ENCODE measurements at regions of chr10 and their contacts with region 1.

Region 1: GRCh38 chr10:14822879-14823755 is 14.7 kb downstream of the CDNF start:
- DNase-seq: no peak
- H3K4me3 Mint-ChIP-seq: no peak overlapping the region
- H3K27ac Mint-ChIP-seq: no peak overlapping the region
- H3K4me1 Mint-ChIP-seq: peaks cover 22% of the 10 kb centered on the region
- H3K27me3 Mint-ChIP-seq: peaks cover 9% of the 10 kb centered on the region

Region 2: DNA sequence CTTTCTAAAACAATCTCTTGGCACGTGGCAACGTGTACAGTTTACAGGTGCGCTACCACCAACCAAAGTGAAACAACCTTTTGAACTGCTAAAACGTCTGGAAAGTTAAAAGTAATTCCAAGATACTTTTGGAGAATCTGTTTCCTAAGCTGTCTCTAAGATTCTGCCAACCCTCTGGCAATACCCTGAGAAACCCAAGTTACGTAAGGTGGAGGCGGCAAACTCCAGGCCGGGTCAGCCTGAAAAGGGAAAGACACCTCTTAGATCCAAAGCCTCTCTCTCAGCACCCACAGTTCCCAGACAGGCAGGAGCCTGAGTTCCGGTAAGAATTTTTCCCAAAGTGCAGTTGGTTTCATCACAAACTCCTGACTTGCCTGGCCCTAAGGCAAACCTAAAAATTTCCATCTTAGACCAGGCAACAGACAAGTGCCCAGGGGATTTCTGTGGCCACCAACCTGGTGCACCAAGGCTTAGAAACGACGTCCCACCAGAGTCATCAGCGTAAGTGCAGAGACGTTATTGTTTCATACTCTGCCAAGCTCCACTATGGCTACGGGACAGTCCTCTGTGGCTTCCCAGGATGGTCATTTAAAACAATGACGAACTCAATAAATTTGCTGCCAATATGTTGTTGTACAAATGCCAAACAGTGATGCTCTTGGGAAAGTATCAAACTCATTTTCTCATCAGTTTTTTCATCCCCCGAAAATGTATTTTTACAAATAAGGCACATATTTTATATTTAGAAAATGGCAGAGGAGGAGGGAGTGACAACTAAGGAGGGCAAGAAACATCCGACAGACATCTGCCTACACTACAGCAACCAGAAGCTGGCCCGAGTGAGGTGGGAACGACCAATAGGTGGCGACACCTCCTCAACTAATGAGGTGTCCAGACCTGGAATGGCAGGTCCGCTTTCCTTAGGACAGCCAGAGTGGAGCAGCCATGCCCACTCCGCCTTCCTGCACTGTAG is 286.6 kb before region 1 on chr10:
- intact Hi-C with region 1: loop called (anchors 1 kb)
- DNase-seq: no peak
- H3K4me3 Mint-ChIP-seq: no peak overlapping the region
- H3K27ac Mint-ChIP-seq: no peak overlapping the region
- H3K4me1 Mint-ChIP-seq: peaks cover 84% of the 10 kb centered on the region
- H3K27me3 Mint-ChIP-seq: no peaks in the 10 kb centered on the region

Measured in activated T-helper 1 cell treated with anti-CD3 and anti-CD28 coated beads, Interleukin-12 subunit alpha, Interleukin-12 subunit beta, Interleukin-2, Interleukin-4 antibody, amounts not matched to agents 30 ng/mL and 10 ng/mL and 1 ng/mL, durations not matched to agents 14 hours and 24 hours and 36 hours (primary cell).